ENCODE measurements at regions of chr14 and their contacts with region 1.

Region 1: GRCh38 chr14:55088356-55088755 is 36.9 kb downstream of the MAPK1IP1L start:
- DNase-seq: no peak
- H3K4me3 ChIP-seq: no peak overlapping the region
- H3K27me3 ChIP-seq: no peaks in the 10 kb centered on the region
- CTCF ChIP-seq: no peak

Region 2: DNA sequence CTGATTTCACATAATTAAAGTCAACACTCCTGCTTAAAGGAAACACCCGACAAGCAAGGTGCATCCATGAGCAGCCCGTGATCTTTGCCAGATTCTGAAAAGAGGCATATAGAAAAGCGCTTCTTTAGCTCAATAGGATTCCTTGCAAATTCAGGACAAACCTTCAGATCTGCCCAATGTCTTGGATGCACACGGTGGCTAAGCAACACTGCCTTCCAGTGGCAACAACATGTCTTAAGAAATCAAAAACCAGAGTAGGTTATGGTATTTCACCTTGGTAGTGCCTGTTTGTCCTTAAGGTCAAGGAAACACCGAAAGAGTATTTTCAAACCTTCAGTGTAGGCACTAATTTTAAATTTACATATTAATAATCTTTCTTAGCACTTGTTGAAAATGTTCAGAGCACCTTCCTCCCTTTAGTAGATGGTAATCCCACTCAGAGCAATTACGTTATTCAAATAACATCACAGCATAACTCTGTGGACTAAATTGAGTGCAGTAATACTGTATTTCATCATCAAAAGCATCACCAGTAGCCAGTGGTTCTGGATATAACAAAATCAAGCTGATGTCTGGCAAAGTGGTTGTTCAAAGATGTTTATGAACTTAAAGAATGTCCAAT is 749.5 kb before region 1 on chr14:
- CTCF ChIA-PET with region 1: no interaction called
- POLR2A ChIA-PET with region 1: no interaction called
- DNase-seq: no peak
- H3K4me3 ChIP-seq: no peak overlapping the region
- H3K27me3 ChIP-seq: no peaks in the 10 kb centered on the region; the same call in 1 of the 2 replicates
- CTCF ChIP-seq: peak; percentile 70

Region 3: GRCh38 chr14:54981698-54982097 is 106.7 kb before region 1 on chr14:
- CTCF ChIA-PET with region 1: no interaction called
- POLR2A ChIA-PET with region 1: no interaction called
- DNase-seq: no peak
- H3K4me3 ChIP-seq: no peak overlapping the region
- H3K27me3 ChIP-seq: no peaks in the 10 kb centered on the region
- CTCF ChIP-seq: peak; percentile 20; the same call in 1 of the 2 replicates

Region 4: DNA sequence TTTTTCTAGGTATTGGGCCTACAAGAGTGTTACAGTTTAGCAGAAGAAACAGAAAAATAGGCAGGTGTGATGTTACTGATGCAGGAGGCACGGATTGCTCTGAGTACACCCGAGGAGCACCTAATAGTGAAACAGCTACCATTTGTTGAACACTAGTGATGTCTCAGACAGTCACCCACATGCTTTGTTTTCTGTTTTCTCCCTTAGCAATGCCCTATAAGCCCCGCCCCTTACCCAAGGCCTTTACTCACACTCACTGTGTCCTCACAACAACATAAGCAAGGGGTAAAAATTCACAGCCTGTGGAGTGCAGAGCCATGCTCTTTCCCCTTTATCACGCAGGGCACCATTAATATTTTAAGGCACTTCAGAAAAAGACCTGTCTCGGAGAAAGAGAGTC is 11.2 kb before region 1 on chr14:
- CTCF ChIA-PET with region 1: interaction called, 16 read pairs
- POLR2A ChIA-PET with region 1: no interaction called
- DNase-seq: no peak
- H3K4me3 ChIP-seq: no peak overlapping the region
- H3K27me3 ChIP-seq: no peaks in the 10 kb centered on the region
- CTCF ChIP-seq: no peak

Region 5: DNA sequence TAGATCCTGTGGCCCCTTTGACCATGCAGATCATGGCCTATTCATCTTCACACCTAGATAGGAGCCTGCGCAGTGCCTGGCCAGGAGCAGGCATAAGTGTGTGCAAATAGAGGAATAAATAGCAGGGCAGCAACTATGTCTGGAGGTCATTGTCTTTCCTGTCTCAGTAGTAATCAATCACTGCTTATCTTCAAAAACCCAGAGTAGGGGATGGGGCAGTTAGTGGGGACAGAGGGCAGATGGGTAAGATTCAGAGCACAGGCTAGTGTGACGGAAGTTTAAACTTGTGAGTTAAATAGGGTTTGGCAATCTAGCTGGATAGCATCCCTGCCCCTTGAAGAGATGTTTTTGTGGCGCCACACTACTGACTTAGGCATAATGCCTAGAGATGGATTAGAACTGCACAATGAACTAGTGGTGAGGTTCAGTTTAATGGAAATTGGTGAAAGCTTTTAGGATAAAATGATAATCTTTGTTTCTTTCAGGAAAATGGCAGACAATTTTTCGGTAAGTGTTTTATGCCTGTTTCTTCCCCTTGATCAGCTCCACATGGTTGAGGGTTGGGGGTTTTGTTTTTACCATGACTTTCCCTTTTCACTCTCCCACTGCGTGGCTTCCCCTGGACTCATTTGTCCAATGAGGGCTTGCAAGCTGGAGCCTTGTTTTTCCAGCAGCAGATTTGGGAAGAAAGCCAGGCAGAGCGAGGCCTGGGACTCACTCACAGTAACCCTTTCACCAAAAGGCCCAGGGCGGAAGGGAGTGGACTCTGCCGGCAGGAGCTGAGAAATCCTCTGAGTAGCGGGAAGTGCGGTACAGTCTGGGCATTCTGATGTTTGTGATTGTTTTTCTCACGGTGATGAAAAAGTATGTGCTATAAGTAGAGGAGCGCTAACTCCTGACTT is 48.8 kb after region 1 on chr14:
- CTCF ChIA-PET with region 1: interaction called, 16 read pairs
- POLR2A ChIA-PET with region 1: interaction called, 3 read pairs
- DNase-seq: peak; percentile 56
- H3K4me3 ChIP-seq: no peak overlapping the region
- H3K27me3 ChIP-seq: no peaks in the 10 kb centered on the region
- CTCF ChIP-seq: peak; percentile 30

Region 6: GRCh38 chr14:55160989-55161388 is 72.6 kb after region 1 on chr14:
- CTCF ChIA-PET with region 1: interaction called, 69 read pairs
- POLR2A ChIA-PET with region 1: no interaction called
- DNase-seq: no peak
- H3K4me3 ChIP-seq: no peak overlapping the region
- H3K27me3 ChIP-seq: no peaks in the 10 kb centered on the region
- CTCF ChIP-seq: peak; percentile 52